Dendritic cell treated with granulocyte-macrophage colony-stimulating factor and Interleukin-4, amounts not matched to agents 40 ng/mL and 50 ng/mL, for 4 days (primary cell): ENCODE measurements at regions of chr11 and their contacts with region 1.

Region 1: GRCh38 chr11:2885676-2886081 is at the start of gene CDKN1C:
- H3K4me3 Mint-ChIP-seq: peak within 1 kb of the TSS; percentile 86
- H3K27ac Mint-ChIP-seq: peak within 1 kb of the TSS; percentile 72
- H3K4me1 Mint-ChIP-seq: peaks cover 11% of the 10 kb centered on the region
- H3K27me3 Mint-ChIP-seq: peaks cover 71% of the 10 kb centered on the region

Region 2: GRCh38 chr11:2428322-2428795 is 457.3 kb before region 1 on chr11:
- intact Hi-C with region 1: loop called (anchors 1 kb)
- H3K4me3 Mint-ChIP-seq: no peak overlapping the region
- H3K27ac Mint-ChIP-seq: no peak overlapping the region
- H3K4me1 Mint-ChIP-seq: no peaks in the 10 kb centered on the region
- H3K27me3 Mint-ChIP-seq: peaks cover 25% of the 10 kb centered on the region

Region 3: DNA sequence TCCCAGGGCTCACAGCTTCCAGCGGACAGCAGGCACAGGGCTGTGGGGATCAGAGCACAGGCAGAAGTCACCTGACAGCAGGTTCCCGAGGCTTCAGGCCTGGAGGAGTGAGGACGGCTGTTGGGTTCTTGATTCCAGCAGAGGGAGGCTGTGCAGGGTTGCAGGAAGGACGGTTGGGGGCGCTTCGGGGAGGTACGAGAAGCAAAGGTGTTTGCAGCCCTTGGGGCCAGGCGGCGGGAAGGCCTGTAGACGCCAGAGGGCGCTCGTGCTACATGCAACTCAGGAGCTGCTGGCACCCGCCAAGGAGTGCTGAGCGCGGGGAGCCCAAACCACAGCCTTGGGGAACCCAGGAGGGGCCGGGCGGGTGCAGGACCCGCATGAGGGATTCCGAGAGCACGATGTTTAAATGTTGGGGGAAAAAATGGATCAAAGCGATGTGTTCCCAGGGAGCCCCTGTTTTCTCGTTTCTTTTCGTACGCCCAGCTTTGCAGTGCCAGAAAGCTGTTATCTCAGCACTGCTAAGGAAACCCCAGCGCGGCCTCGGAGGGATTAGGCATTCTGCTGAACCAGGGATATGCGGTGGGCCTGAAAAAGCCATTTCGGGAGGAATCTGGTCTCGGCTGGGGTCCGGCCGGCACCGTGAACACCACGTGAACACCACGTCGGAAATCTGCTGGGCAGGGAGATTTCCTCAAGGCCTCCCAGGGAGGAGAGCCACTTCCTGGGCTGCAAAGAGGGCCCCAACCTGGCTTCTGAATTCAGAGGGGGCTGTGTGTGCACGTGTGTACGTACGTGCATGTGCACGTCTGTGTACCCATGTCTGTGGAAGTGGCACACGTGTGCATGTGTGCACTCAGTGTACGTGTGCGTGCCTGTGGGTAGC is 352.7 kb before region 1 on chr11:
- intact Hi-C with region 1: loop called (anchors 1 kb)
- H3K4me3 Mint-ChIP-seq: peak overlapping the region; percentile 70
- H3K27ac Mint-ChIP-seq: peak overlapping the region; percentile 56
- H3K4me1 Mint-ChIP-seq: peaks cover 64% of the 10 kb centered on the region
- H3K27me3 Mint-ChIP-seq: peaks cover 18% of the 10 kb centered on the region

Region 4: DNA sequence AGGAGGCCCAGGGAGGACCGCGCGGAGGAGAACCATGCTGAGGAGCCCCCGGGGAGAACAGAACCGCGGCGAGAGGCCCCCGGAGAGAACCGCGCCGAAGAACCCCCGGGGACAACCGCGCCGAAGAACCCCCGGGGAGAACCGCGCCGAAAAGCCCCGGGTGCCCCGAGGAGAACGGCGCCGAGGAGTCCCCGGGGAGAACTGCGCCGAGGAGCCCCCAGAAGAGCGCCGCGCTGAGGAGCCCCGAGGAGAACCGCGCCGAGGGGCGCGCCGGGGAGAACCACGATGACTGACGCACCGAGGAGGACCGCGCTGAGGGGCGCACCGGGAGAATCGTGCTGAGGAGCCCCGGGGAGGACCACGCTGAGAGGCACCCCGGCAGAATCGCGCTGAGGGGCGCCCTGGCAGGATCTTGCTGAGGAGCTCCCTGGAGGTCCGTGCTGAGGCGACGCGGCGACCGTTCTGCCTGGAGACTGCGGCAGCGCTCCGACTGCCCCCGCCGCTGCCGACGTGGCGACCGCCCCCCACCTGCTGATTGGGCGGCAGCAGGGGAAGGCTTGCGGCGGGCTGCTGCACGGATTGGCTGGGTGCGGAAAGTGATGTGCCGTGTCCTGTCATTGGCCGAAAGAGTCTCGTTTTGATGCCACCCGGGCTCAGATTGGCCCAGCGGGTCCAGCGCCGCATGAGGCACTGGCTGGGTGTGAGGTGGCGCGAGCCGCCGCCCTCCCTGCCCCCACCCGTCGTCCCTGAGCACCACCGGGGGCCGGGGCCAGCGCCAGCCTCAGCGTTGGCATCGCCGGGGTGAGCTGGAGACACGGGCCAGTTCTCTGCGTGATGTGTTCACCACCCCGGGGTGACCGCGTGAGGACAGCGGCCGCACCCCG is 185.9 kb before region 1 on chr11 and contains the start of gene KCNQ1OT1:
- intact Hi-C with region 1: loop called (anchors 10 kb)
- H3K4me3 Mint-ChIP-seq: peak within 1 kb of the TSS; percentile 83
- H3K27ac Mint-ChIP-seq: peak within 1 kb of the TSS; percentile 84
- H3K4me1 Mint-ChIP-seq: peaks cover 13% of the 10 kb centered on the region
- H3K27me3 Mint-ChIP-seq: peaks cover 2% of the 10 kb centered on the region

Region 5: GRCh38 chr11:3073029-3073435 is 187.4 kb after region 1 on chr11:
- intact Hi-C with region 1: no loop called
- H3K4me3 Mint-ChIP-seq: no peak overlapping the region
- H3K27ac Mint-ChIP-seq: no peak overlapping the region
- H3K4me1 Mint-ChIP-seq: no peaks in the 10 kb centered on the region
- H3K27me3 Mint-ChIP-seq: peaks cover 20% of the 10 kb centered on the region